Heart left ventricle (tissue), 16 donors: ENCODE measurements at regions of chr16 and their contacts with region 1.

Region 1: GRCh38 chr16:81204798-81205680 is 33.5 kb upstream of the BCO1 start:
- DNase-seq: no peak
- ATAC-seq: peak in 2 of 4 donors; percentile 32 to 33
- H3K4me3 ChIP-seq: no peak overlapping the region
- H3K27ac ChIP-seq: no peak overlapping the region
- H3K4me1 ChIP-seq: peaks cover 0 to 5% (median 0%) of the 10 kb centered on the region in 12 donors
- H3K27me3 ChIP-seq: peaks cover 0 to 5% (median 0%) of the 10 kb centered on the region in 9 donors
- CTCF ChIP-seq: peak; percentile 41 to 77 (median 64)
- POLR2A ChIP-seq: no peak

Region 2: GRCh38 chr16:80300876-80301275 is 904.2 kb before region 1 on chr16:
- intact Hi-C with region 1: no loop called
- DNase-seq: no peak
- ATAC-seq: no peak
- H3K4me3 ChIP-seq: no peak overlapping the region
- H3K27ac ChIP-seq: no peak overlapping the region
- H3K4me1 ChIP-seq: no peaks in the 10 kb centered on the region
- H3K27me3 ChIP-seq: peaks cover 0 to 3% (median 0%) of the 10 kb centered on the region in 9 donors
- CTCF ChIP-seq: no peak
- POLR2A ChIP-seq: no peak

Region 3: GRCh38 chr16:81158964-81159363 is 46.1 kb before region 1 on chr16:
- intact Hi-C with region 1: no loop called
- DNase-seq: no peak
- ATAC-seq: no peak
- H3K4me3 ChIP-seq: no peak overlapping the region
- H3K27ac ChIP-seq: no peak overlapping the region
- H3K4me1 ChIP-seq: no peaks in the 10 kb centered on the region
- H3K27me3 ChIP-seq: no peaks in the 10 kb centered on the region
- CTCF ChIP-seq: no peak
- POLR2A ChIP-seq: no peak

Region 4: DNA sequence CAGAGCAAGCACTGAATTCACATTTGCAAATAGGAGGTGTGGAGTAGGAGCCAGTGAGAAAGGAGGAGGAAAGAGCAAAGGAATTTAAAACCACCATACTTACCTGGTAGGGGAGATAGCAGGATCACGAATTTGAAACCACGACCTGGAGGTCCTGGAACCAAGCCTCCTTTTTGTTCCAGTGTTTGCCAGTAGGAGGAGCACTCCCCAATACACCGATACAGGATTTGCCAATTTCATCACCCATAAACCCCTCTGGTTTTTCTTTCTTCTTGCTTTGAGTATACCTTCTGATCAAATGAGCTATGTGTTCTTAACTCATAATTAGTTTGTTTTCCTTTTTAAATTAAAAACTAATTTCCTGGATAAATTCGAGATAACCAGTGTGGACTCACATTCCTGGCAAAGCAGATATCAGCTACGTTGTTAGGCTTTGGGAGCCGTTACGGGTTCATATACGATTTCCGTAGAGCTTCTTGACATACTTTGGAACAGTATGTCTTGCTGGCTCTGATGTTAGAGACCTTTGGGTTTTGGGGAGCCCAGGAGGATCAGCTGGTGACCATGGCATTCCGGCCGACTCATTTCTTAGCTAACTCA is 56.1 kb after region 1 on chr16:
- intact Hi-C with region 1: loop called in 1 of 10 experiments (anchors 5 kb)
- DNase-seq: no peak
- ATAC-seq: no peak
- H3K4me3 ChIP-seq: no peak overlapping the region
- H3K27ac ChIP-seq: no peak overlapping the region
- H3K4me1 ChIP-seq: peaks cover 0 to 17% (median 2%) of the 10 kb centered on the region in 12 donors
- H3K27me3 ChIP-seq: no peaks in the 10 kb centered on the region
- CTCF ChIP-seq: peak; percentile 34 to 66 (median 54)
- POLR2A ChIP-seq: no peak

Region 5: GRCh38 chr16:81314603-81315270 is 109.7 kb after region 1 on chr16 and contains the start of gene GAN:
- intact Hi-C with region 1: loop called in 4 of 10 experiments (anchors 5 to 10 kb)
- DNase-seq: peak; percentile 95 to 97 (median 96)
- ATAC-seq: peak; percentile 98 to 100 (median 99)
- H3K4me3 ChIP-seq: peak within 1 kb of the TSS; percentile 56 to 94 (median 89)
- H3K27ac ChIP-seq: peak within 1 kb of the TSS; percentile 64 to 96 (median 88)
- H3K4me1 ChIP-seq: peaks cover 0 to 38% (median 22%) of the 10 kb centered on the region in 12 donors
- H3K27me3 ChIP-seq: no peaks in the 10 kb centered on the region
- CTCF ChIP-seq: no peak
- POLR2A ChIP-seq: peak; percentile 67 to 90
- total RNA-seq, gene GAN: 8.7 to 17.7 (median 13.1) TPM

Region 6: DNA sequence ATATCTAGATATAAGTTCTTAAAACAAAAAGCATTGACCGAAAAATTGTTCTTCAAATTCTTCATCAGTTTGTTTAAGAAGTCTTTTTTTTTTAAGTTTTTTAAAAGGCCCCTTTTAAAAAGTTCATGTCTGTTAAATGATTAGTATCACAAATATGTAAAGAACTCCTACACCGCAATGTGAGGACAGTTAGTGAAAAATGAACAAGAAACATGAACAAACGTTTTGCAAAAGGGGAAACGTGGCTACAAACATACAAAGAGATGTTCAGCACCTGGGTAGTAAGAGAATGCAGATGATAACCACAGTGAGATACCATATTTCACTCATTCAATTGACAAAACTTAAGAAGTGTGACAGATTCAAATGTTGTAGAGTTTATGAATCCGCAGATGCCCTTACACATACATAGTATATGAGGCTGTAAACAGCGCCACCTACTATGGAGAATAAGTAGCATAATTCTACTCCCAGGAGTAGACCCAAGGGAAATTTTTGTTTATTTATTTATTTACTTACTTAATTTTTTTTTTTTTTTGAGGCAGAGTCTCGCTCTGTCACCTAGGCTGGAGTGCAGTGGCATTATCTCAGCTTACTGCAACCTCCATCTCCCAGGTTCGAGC is 145.1 kb after region 1 on chr16:
- intact Hi-C with region 1: loop called in 1 of 10 experiments (anchors 10 kb)
- DNase-seq: no peak
- ATAC-seq: no peak
- H3K4me3 ChIP-seq: no peak overlapping the region
- H3K27ac ChIP-seq: no peak overlapping the region
- H3K4me1 ChIP-seq: no peaks in the 10 kb centered on the region
- H3K27me3 ChIP-seq: no peaks in the 10 kb centered on the region
- CTCF ChIP-seq: peak in 1 of 12 donors; percentile 12
- POLR2A ChIP-seq: no peak

Region 7: GRCh38 chr16:81360135-81360534 is 155.1 kb after region 1 on chr16:
- intact Hi-C with region 1: loop called in 4 of 10 experiments (anchors 5 to 10 kb)
- DNase-seq: no peak
- ATAC-seq: no peak
- H3K4me3 ChIP-seq: no peak overlapping the region
- H3K27ac ChIP-seq: no peak overlapping the region
- H3K4me1 ChIP-seq: no peaks in the 10 kb centered on the region
- H3K27me3 ChIP-seq: no peaks in the 10 kb centered on the region
- CTCF ChIP-seq: no peak
- POLR2A ChIP-seq: no peak

Region 8: DNA sequence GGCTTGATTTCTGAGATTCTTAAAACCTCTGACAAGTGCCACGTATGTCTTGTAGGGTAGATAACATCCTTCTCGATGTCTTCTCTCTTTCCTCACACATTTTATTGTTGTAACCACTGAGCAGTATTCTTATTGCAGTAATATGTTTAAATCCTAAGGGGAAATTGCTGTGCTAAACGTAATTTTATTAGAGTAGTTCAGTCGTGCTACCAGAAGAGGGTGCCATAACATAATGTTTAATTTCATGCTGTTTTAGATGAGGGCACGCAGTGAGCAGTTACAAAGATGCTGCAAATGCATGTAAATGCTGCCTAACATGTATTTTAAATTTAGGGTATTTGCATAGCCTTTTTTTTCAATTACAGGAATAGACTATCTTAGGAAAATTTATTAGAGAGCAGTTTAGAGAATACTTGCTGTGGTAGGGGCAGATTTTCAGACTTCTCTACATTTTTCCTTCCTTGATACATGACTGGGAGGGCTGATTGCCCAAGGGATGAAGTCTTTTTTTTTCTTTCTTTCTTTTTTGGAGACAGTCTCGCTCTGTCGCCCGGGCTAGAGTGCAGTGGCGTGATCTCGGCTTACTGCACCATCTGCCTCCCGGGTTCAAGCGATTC is 161.4 kb after region 1 on chr16:
- intact Hi-C with region 1: loop called in 3 of 10 experiments (anchors 5 to 10 kb)
- DNase-seq: no peak
- ATAC-seq: peak in 3 of 4 donors; percentile 60 to 74 (median 61)
- H3K4me3 ChIP-seq: no peak overlapping the region
- H3K27ac ChIP-seq: no peak overlapping the region
- H3K4me1 ChIP-seq: peaks cover 0 to 25% (median 6%) of the 10 kb centered on the region in 12 donors
- H3K27me3 ChIP-seq: no peaks in the 10 kb centered on the region
- CTCF ChIP-seq: peak; percentile 49 to 76 (median 62)
- POLR2A ChIP-seq: no peak

Region 9: DNA sequence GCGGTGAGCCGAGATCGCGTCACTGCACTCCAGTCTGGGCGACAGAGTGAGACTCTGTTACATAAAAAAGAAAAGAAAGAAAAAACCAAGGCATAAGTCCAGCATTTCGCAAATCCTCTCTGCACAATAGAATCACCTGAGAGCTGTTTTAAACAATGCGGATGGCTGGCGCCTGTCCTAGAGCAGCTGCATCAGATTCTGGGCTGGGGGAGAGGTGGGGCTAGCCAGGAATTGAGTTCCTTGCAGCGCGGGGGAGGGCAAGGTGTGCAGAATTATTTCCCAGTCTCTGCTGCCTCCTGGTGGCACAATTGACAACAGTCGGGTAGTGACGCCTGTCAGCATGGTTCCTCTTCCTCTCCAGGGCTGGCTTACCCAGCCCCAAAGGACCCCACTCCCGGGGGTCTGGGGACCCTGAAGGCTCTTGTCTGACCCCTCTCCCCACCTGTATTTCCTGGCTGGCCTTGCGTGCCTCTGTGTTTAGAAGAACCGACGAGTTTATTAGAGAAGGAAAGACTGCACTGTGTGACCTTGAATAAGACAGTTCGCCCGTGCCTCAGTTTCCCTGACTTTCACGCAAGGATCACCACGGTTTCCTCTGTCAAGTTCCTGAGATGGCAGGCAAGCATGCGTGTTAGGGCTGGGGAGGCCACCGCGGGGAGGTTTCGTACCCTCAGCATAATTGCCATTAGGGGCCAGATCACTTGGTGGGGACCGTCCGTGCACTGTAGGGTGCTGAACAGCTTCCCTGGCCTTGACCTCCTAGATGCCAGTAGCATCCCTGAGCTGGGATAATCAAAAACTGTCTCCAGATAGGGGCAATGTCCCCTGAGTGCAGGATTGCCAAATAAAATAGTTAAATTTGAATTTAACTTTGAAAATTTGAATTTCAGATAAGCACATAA is 533.1 kb after region 1 on chr16:
- intact Hi-C with region 1: loop called in 9 of 10 experiments (anchors 5 to 10 kb)
- DNase-seq: peak; percentile 79 to 83 (median 82)
- ATAC-seq: peak; percentile 89 to 96 (median 93)
- H3K4me3 ChIP-seq: peak overlapping the region in 10 of 12 donors; percentile 2 to 44 (median 29)
- H3K27ac ChIP-seq: peak overlapping the region in 5 of 12 donors; percentile 20 to 52 (median 33)
- H3K4me1 ChIP-seq: peaks cover 0 to 14% (median 4%) of the 10 kb centered on the region in 12 donors
- H3K27me3 ChIP-seq: peaks cover 0 to 2% (median 0%) of the 10 kb centered on the region in 9 donors
- CTCF ChIP-seq: peak; percentile 75 to 91 (median 82)
- POLR2A ChIP-seq: no peak